Heart right ventricle (tissue), 16 donors: ENCODE measurements at regions of chr7 and their contacts with region 1.

Region 1: DNA sequence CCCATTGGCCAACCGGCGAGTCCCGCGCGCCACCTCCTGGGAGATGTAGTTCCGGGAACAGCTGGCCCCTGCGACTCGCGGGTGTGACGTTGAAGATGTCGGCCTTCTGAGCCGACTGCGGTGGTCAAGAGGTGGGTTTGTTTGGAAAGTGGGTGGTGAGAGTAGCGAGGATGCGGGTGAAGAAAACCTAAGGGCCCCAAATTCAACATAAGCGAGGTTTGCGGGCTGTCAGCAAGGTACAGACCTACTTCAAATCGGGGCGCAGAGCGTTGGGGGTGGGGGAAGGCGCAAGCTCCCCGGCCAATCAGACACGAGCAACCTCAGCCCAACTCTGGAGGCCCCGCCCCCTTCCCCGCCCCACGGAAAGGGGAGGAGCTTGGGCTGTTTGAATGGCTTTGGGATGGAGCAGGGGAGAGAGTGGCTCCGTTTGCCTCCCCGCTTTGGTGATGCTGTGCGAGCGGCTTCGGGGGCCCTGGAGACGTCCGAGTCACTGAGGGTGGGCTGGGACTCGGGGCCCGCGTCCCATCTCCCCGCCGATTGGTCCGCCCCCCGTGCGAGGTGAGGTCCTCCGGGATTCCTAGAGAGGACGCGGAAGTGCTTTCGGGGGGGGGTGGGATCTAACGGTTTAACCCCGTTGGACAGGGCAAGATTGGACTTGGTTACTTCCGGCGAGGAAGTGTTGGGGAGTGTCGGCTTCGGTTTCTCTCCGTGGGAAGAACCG is at the start of gene ZKSCAN5:
- DNase-seq: peak; percentile 98 to 99
- ATAC-seq: peak; percentile 94 to 97 (median 96)
- H3K4me3 ChIP-seq: peak within 1 kb of the TSS; percentile 54 to 87 (median 76)
- H3K27ac ChIP-seq: peak within 1 kb of the TSS; percentile 80 to 96 (median 93)
- H3K4me1 ChIP-seq: peaks cover 12 to 45% (median 36%) of the 10 kb centered on the region in 9 donors
- H3K27me3 ChIP-seq: no peaks in the 10 kb centered on the region
- CTCF ChIP-seq: peak in 3 of 9 donors; percentile 26 to 33 (median 29)
- total RNA-seq, gene ZKSCAN5: 5.7 to 8.5 (median 7.8) TPM

Region 2: DNA sequence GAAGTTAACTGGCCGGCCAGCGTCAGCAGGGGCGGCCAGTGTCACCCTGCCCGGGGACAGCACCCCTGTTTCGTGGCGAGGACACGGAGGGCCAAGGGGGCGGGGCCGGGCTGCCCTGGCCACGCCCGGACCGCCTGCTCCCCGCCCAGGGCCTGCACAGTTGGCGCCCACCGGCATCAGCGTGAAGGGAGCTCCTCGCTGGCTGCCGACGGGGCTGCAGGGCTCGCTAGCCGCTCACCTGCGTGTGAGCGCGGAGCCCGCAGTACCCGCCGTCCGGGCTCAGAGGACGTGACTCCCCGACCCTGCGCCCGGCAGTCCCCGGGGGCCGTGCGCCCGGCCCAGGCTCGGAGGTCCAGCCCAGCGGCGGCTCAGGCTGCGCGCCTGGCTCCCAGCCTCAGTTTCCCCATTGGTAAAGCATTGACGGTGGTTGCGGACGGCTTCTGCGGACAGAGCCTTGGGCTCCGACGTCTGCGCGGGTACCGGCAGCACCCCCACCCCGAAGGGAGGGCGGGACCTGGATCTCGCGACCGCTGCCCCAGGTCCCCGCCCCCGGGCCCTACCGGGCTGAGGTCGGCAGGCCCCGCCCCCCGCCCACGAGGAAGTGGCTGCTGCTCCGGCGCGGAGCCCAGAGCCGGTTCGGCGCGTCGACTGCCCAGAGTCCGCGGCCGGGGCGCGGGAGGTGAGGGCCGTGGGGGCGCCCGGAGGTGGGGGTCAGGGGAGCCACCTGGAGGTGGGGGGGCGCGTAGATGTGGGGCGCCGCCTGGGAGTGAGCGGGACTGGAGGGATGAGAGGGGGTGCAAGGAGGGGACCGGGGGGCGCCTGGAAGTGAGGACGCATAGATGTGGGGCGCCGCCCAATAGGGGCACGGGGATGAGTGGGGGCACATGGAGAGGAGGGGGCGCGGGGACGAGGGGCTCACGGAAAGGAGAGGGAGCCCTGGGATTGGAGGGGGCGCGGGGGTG is 130.4 kb before region 1 on chr7 and contains the start of gene ARPC1B:
- intact Hi-C with region 1: loop called in 1 of 10 experiments (anchors 10 kb)
- DNase-seq: peak; percentile 83 to 84
- ATAC-seq: peak; percentile 59 to 86 (median 78)
- H3K4me3 ChIP-seq: peak within 1 kb of the TSS; percentile 75 to 97 (median 90)
- H3K27ac ChIP-seq: peak within 1 kb of the TSS; percentile 91 to 98 (median 97)
- H3K4me1 ChIP-seq: peaks cover 0 to 57% (median 34%) of the 10 kb centered on the region in 9 donors
- H3K27me3 ChIP-seq: no peaks in the 10 kb centered on the region
- CTCF ChIP-seq: no peak
- total RNA-seq, gene ARPC1B: 16.2 to 92.0 (median 19.0) TPM

Region 3: GRCh38 chr7:99392677-99393354 is 111.9 kb before region 1 on chr7:
- intact Hi-C with region 1: no loop called
- DNase-seq: peak; percentile 80
- ATAC-seq: peak; percentile 77 to 90 (median 86)
- H3K4me3 ChIP-seq: peak overlapping the region; percentile 20 to 85 (median 60)
- H3K27ac ChIP-seq: peak overlapping the region; percentile 13 to 77 (median 73)
- H3K4me1 ChIP-seq: peaks cover 3 to 24% (median 21%) of the 10 kb centered on the region in 9 donors
- H3K27me3 ChIP-seq: no peaks in the 10 kb centered on the region
- CTCF ChIP-seq: peak in 4 of 9 donors; percentile 8 to 28 (median 16)

Region 4: GRCh38 chr7:99408379-99409191 is 96.2 kb before region 1 on chr7 and contains the starts of genes BUD31 and PDAP1:
- intact Hi-C with region 1: loop called in 1 of 10 experiments (anchors 5 kb)
- DNase-seq: peak; percentile 93
- ATAC-seq: peak; percentile 93 to 97 (median 96)
- H3K4me3 ChIP-seq: peak within 1 kb of the TSS; percentile 72 to 100 (median 90)
- H3K27ac ChIP-seq: peak within 1 kb of the TSS; percentile 96 to 99 (median 97)
- H3K4me1 ChIP-seq: peaks cover 17 to 55% (median 41%) of the 10 kb centered on the region in 9 donors
- H3K27me3 ChIP-seq: no peaks in the 10 kb centered on the region
- CTCF ChIP-seq: peak in 2 of 9 donors; percentile 5 to 29
- total RNA-seq, gene BUD31: 28.3 to 59.7 (median 40.9) TPM
- total RNA-seq, gene PDAP1: 89.7 to 130 (median 97.6) TPM

Region 5: DNA sequence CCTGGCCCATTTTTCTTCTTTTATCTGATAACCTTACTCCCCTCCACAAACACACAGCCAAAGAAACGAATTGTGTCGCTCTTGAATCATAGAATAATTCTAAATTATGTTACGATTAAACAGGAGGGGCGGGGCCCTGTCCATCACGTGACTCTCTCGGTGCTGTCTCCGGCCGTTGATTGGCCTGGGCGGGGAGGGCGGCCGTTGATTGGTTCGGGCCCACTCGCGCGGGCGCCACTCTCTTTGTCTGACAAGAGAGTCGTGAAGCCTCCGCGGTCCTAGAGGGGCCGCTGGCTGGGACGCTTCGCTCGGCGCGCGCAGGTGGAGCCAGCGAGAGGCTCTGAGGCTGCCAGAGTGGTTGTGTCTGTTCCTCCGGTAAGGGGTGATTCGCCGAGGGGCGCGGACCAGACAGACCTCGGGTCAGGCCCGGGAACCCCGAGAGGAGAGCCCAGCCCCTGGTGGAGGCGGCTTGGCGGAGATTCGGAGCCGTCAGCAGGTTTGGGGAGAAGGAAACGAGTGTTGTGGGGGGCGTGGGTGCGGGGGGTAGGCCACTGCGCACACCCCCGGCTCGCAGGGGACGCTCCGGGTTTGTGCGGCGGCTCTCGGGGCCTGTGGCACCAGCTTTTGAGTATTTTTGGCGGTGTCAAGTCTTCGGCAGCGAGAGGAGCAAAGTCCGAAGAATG is 32.1 kb before region 1 on chr7 and contains the start of gene ZNF789:
- intact Hi-C with region 1: loop called in 4 of 10 experiments (anchors 1 to 2 kb)
- DNase-seq: peak; percentile 98
- ATAC-seq: peak; percentile 97 to 99 (median 99)
- H3K4me3 ChIP-seq: peak within 1 kb of the TSS; percentile 59 to 93 (median 72)
- H3K27ac ChIP-seq: peak within 1 kb of the TSS; percentile 57 to 88 (median 84)
- H3K4me1 ChIP-seq: peaks cover 0 to 35% (median 21%) of the 10 kb centered on the region in 9 donors
- H3K27me3 ChIP-seq: no peaks in the 10 kb centered on the region
- CTCF ChIP-seq: peak in 1 of 9 donors; percentile 11
- total RNA-seq, gene ZNF789: 1.7 to 5.6 (median 3.7) TPM

Region 6: GRCh38 chr7:99551767-99552463 is 47.2 kb after region 1 on chr7 and contains the start of gene FAM200A:
- intact Hi-C with region 1: loop called in 8 of 10 experiments (anchors 5 to 10 kb)
- DNase-seq: peak; percentile 90 to 92
- ATAC-seq: peak; percentile 97 to 100 (median 99)
- H3K4me3 ChIP-seq: peak within 1 kb of the TSS; percentile 39 to 97 (median 87)
- H3K27ac ChIP-seq: peak within 1 kb of the TSS; percentile 6 to 96 (median 90)
- H3K4me1 ChIP-seq: peaks cover 0 to 29% (median 21%) of the 10 kb centered on the region in 9 donors
- H3K27me3 ChIP-seq: no peaks in the 10 kb centered on the region
- CTCF ChIP-seq: no peak
- total RNA-seq, gene FAM200A: 4.3 to 7.7 (median 5.6) TPM

Region 7: GRCh38 chr7:99558306-99559174 is 53.8 kb after region 1 on chr7 and contains the start of gene ZNF655:
- intact Hi-C with region 1: loop called in 9 of 10 experiments (anchors 2 to 10 kb)
- DNase-seq: peak; percentile 91 to 94
- ATAC-seq: peak; percentile 97 to 99 (median 97)
- H3K4me3 ChIP-seq: peak within 1 kb of the TSS; percentile 70 to 99 (median 86)
- H3K27ac ChIP-seq: peak within 1 kb of the TSS; percentile 77 to 99 (median 98)
- H3K4me1 ChIP-seq: peaks cover 4 to 57% (median 34%) of the 10 kb centered on the region in 9 donors
- H3K27me3 ChIP-seq: no peaks in the 10 kb centered on the region
- CTCF ChIP-seq: peak in 1 of 9 donors; percentile 21
- total RNA-seq, gene ZNF655: 27.2 to 37.6 (median 30.8) TPM

Region 8: GRCh38 chr7:99616359-99617191 is 111.8 kb after region 1 on chr7 and contains the start of gene ZSCAN25:
- intact Hi-C with region 1: loop called in 2 of 10 experiments (anchors 1 to 5 kb)
- DNase-seq: peak; percentile 89 to 91
- ATAC-seq: peak; percentile 96 to 99 (median 98)
- H3K4me3 ChIP-seq: peak within 1 kb of the TSS; percentile 58 to 99 (median 86)
- H3K27ac ChIP-seq: peak within 1 kb of the TSS in 9 of 10 donors; percentile 70 to 92 (median 85)
- H3K4me1 ChIP-seq: peaks cover 5 to 20% (median 13%) of the 10 kb centered on the region in 9 donors
- H3K27me3 ChIP-seq: no peaks in the 10 kb centered on the region
- CTCF ChIP-seq: peak in 7 of 9 donors; percentile 22 to 55 (median 43)
- total RNA-seq, gene ZSCAN25: 6.1 to 10.5 (median 7.8) TPM